ENCODE measurements at regions of chr7 and their contacts with region 1.

Region 1: DNA sequence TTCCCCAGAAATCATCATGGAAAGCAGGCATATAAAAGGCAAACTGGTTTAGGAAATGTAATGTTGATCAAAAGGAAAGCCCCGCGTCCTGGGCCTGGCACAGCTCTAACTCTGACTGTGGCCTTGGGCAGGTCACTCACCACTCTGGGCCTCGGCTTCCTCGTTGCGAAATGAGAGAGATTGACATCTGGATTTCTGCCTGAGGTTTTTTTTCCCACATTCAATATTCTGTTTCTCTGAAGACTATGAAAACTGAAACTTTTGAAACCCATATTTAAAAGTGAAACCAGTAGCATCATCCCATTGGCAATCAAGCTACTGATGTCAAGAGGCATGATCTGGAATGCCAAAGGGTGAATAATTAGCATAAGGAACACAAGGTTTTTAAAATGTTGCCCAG is 369.7 kb upstream of the NPVF start:
- DNase-seq: no peak
- ATAC-seq: peak in 1 of 2 donors; percentile 26
- H3K4me3 ChIP-seq: no peak overlapping the region
- H3K27ac ChIP-seq: no peak overlapping the region
- H3K4me1 ChIP-seq: peaks cover 0 to 13% of the 10 kb centered on the region in 2 donors
- H3K27me3 ChIP-seq: no peaks in the 10 kb centered on the region
- CTCF ChIP-seq: no peak
- POLR2A ChIP-seq: no peak

Region 2: DNA sequence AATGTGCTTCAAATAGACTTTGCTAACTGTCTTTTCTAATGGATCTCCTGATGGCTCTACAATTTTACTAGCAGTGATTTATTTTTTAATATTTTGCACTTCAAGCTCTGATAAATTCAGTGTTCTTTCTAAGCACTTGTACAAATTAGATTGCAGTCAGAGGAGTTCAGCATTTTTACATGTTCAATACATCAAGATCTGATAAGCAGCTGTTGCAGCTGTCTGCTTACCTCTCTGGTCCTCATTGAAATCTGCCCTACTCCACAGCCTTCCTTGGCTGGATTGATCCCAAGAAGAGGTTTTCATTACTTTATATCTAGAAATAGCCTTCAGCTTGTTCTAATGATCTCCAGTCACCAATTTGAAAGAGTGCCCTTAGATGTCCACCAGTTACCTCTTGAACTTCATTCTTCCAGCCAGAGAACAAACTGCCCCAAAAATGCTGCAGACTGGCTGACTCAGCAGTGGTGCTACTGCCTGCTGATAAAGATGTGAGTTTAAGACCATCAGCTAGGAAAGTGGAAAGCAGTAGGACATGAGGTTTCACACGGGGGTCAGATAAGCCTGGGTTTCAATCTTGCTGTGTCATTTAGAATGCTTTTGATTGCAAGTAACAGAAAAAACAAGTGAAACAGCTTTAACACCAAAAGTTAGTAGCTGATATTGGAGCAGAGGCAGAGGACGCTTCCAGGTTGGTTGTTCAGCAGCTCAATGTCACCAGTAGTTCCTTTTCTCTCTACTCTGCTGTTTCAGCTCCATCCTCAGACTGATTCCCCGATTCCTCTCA is 18.8 kb before region 1 on chr7:
- in situ Hi-C with region 1: no loop called
- intact Hi-C with region 1: no loop called
- DNase-seq: no peak
- ATAC-seq: no peak
- H3K4me3 ChIP-seq: no peak overlapping the region
- H3K27ac ChIP-seq: no peak overlapping the region
- H3K4me1 ChIP-seq: no peaks in the 10 kb centered on the region
- H3K27me3 ChIP-seq: no peaks in the 10 kb centered on the region
- CTCF ChIP-seq: no peak
- POLR2A ChIP-seq: no peak

Region 3: DNA sequence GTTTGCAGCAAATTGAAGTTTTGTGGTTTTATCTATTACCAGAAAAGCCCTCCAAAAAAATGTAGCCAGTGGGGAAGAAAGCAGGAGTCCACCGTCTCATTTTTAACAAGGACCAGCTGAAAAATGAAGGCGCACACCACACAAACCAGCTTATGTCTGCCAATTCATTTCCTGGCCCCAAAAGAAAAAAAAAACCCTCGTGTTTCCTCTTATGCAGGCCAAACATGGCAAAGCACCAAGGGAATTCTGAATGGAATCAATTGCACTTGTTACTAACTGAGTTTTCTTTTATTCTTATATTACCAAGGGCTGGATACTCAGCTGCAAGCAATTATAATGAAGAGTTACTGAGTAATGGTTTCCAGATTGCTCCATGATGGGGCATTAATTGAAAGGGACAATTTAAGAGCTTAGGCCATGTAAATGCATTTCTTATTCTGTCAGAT is 58.7 kb after region 1 on chr7:
- in situ Hi-C with region 1: no loop called
- intact Hi-C with region 1: loop called (anchors 5 kb)
- DNase-seq: no peak
- ATAC-seq: no peak
- H3K4me3 ChIP-seq: no peak overlapping the region
- H3K27ac ChIP-seq: no peak overlapping the region
- H3K4me1 ChIP-seq: peaks cover 0 to 19% of the 10 kb centered on the region in 2 donors
- H3K27me3 ChIP-seq: no peaks in the 10 kb centered on the region
- CTCF ChIP-seq: no peak
- POLR2A ChIP-seq: no peak

Region 4: GRCh38 chr7:25951031-25951948 is 353.3 kb after region 1 on chr7:
- in situ Hi-C with region 1: no loop called
- intact Hi-C with region 1: loop called (anchors 10 kb)
- DNase-seq: peak; percentile 82 to 86
- ATAC-seq: peak; percentile 86 to 90
- H3K4me3 ChIP-seq: peak overlapping the region; percentile 59 to 88 (median 64)
- H3K27ac ChIP-seq: peak overlapping the region; percentile 68 to 76 (median 72)
- H3K4me1 ChIP-seq: peaks cover 5 to 15% of the 10 kb centered on the region in 2 donors
- H3K27me3 ChIP-seq: no peaks in the 10 kb centered on the region
- CTCF ChIP-seq: no peak
- POLR2A ChIP-seq: peak; percentile 59 to 65